ENCODE measurements at regions of chr22 and their contacts with region 1.

Region 1: GRCh38 chr22:36528795-36529751 is at the start of gene EIF3D:
- DNase-seq: peak; percentile 99
- H3K4me3 Mint-ChIP-seq: peak within 1 kb of the TSS; percentile 87
- H3K27ac Mint-ChIP-seq: peak within 1 kb of the TSS; percentile 95
- H3K4me1 Mint-ChIP-seq: peaks cover 5% of the 10 kb centered on the region
- H3K27me3 Mint-ChIP-seq: no peaks in the 10 kb centered on the region
- CTCF ChIP-seq: no peak
- total RNA-seq, gene EIF3D: 258 and 306 TPM in 2 replicates

Region 2: DNA sequence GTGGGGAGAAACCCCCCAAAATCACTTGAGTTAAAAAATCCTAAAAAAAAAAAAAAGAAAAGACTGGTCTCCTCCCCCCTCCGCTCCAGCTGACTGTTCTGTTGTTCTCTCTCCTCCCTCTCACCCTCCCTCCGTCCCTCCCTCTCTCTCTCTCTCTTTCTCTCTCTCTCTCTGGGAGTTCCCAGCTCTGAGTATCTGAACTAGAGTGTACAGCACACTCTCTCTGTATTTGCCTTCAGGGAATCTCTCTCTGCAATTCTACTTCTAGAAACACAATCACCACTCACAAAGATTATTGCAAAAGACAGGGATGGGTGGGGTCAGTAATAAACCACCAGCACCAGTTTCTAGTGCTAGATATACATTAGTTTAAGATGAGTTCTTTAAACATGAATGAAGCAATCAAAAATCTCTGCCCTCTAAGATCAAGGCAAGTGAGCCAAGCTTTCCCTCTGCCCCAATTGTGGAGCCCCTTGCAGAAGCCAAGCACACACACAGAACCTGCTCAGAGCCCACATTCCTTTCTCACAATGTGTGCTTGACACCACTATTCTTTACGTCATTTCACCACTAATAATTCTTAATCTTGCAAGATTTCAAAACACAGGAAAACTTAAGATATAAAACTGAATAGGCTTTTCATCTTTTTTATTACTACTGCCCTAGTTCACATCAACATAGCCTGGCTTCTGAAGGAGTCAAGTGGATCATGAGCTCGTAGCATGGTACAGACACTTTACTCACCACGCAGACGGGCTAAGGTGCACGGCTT is 634.0 kb before region 1 on chr22:
- CTCF ChIA-PET with region 1: no interaction called
- POLR2A ChIA-PET with region 1: no interaction called
- intact Hi-C with region 1: no loop called
- DNase-seq: peak; percentile 96
- H3K4me3 Mint-ChIP-seq: peak overlapping the region; percentile 79
- H3K27ac Mint-ChIP-seq: peak overlapping the region; percentile 90
- H3K4me1 Mint-ChIP-seq: peaks cover 42% of the 10 kb centered on the region
- H3K27me3 Mint-ChIP-seq: no peaks in the 10 kb centered on the region
- CTCF ChIP-seq: no peak

Region 3: DNA sequence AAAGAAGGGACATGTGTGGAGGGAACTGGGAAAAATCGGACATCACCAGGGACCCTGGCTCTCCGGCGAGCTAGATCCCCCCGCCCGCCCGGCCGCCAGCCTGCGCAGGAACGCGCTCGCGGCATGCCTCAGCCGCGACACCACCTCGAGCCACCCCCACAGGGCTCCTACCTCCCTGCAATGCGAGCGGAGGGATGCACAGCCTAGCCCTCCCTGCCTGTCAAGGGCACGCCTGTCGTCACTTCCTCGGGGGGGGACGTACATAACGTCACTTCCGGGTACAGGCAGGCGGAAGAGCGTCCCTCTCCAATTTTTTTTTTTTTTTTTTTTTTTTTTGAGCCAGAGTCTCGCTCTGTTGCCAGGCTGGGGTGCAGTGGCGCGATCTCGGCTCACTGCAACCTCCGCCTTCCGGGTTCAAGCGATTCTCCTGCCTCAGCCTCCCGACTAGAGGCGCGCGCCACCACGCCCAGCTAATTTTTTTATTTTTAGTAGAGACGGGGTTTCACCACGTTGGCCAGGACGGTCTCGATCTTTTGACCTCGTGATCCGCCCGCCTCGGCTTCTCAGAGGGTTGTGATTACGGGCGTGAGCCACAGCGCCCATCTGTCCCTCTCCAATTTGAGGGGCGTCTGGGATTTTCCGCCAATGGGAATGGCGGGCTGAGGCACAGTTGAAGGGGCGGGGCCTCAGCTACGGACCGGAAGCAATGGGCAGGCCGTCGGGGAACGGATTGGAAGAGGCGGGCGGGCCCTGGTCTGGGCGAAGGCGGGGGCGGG is 47.5 kb before region 1 on chr22 and contains the start of gene TXN2:
- CTCF ChIA-PET with region 1: interaction called, 3 read pairs
- POLR2A ChIA-PET with region 1: interaction called, 18 read pairs
- intact Hi-C with region 1: loop called (anchors 2 kb)
- DNase-seq: peak; percentile 97
- H3K4me3 Mint-ChIP-seq: peak within 1 kb of the TSS; percentile 96
- H3K27ac Mint-ChIP-seq: peak within 1 kb of the TSS; percentile 91
- H3K4me1 Mint-ChIP-seq: peaks cover 10% of the 10 kb centered on the region
- H3K27me3 Mint-ChIP-seq: no peaks in the 10 kb centered on the region
- CTCF ChIP-seq: no peak
- total RNA-seq, gene TXN2: 61.5 and 83.2 TPM in 2 replicates

Region 4: GRCh38 chr22:36546092-36546804 is 17.2 kb after region 1 on chr22:
- CTCF ChIA-PET with region 1: interaction called, 3 read pairs
- POLR2A ChIA-PET with region 1: interaction called, 41 read pairs
- intact Hi-C with region 1: loop called (anchors 2 kb)
- DNase-seq: peak; percentile 54
- H3K4me3 Mint-ChIP-seq: no peak overlapping the region
- H3K27ac Mint-ChIP-seq: no peak overlapping the region
- H3K4me1 Mint-ChIP-seq: peaks cover 22% of the 10 kb centered on the region
- H3K27me3 Mint-ChIP-seq: peaks cover 17% of the 10 kb centered on the region
- CTCF ChIP-seq: peak; percentile 78

Region 5: DNA sequence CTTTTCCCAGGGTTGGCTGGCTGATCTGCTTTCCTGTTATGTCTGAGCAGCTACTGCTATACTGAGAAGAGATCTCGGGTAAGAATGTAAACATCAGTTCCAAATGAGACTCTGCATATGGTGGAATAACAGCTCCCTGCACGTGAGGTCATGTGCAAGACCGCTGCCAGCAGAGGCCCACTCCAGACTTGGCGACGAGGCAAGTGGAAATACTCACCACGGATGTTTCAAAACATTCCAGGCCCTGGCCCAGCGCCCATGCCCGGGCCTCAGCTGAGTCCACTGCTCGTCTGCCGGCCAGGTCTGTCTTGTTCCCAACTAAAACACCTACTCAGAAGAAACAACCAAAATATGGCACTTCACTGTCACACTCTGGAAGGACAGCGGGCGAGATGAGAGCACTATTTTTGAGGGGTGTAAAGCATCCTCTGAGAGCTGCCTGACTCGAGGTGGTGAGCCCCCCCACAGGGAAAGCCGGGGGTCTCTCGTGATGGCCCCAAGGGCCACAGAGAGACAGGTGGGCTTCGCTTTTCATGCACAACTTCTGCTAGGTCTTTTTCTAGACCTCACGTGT is 233.7 kb after region 1 on chr22:
- CTCF ChIA-PET with region 1: interaction called, 5 read pairs
- POLR2A ChIA-PET with region 1: interaction called, 15 read pairs
- intact Hi-C with region 1: no loop called
- DNase-seq: peak; percentile 54
- H3K4me3 Mint-ChIP-seq: peak overlapping the region; percentile 12
- H3K27ac Mint-ChIP-seq: peak overlapping the region; percentile 52
- H3K4me1 Mint-ChIP-seq: peaks cover 29% of the 10 kb centered on the region
- H3K27me3 Mint-ChIP-seq: no peaks in the 10 kb centered on the region
- CTCF ChIP-seq: no peak

Region 6: GRCh38 chr22:37019309-37020125 is 490.4 kb after region 1 on chr22 and contains the starts of genes MPST and TST:
- CTCF ChIA-PET with region 1: no interaction called
- POLR2A ChIA-PET with region 1: interaction called, 10 read pairs
- intact Hi-C with region 1: no loop called
- DNase-seq: peak; percentile 62
- H3K4me3 Mint-ChIP-seq: peak within 1 kb of the TSS; percentile 91
- H3K27ac Mint-ChIP-seq: peak within 1 kb of the TSS; percentile 88
- H3K4me1 Mint-ChIP-seq: peaks cover 22% of the 10 kb centered on the region
- H3K27me3 Mint-ChIP-seq: no peaks in the 10 kb centered on the region
- CTCF ChIP-seq: no peak
- total RNA-seq, gene MPST: 40.7 and 51.2 TPM in 2 replicates
- total RNA-seq, gene TST: 16.2 and 16.4 TPM in 2 replicates

Measured in MCF 10A (cell line).